ENCODE measurements at regions of chr1 and their contacts with region 1.

Region 1: DNA sequence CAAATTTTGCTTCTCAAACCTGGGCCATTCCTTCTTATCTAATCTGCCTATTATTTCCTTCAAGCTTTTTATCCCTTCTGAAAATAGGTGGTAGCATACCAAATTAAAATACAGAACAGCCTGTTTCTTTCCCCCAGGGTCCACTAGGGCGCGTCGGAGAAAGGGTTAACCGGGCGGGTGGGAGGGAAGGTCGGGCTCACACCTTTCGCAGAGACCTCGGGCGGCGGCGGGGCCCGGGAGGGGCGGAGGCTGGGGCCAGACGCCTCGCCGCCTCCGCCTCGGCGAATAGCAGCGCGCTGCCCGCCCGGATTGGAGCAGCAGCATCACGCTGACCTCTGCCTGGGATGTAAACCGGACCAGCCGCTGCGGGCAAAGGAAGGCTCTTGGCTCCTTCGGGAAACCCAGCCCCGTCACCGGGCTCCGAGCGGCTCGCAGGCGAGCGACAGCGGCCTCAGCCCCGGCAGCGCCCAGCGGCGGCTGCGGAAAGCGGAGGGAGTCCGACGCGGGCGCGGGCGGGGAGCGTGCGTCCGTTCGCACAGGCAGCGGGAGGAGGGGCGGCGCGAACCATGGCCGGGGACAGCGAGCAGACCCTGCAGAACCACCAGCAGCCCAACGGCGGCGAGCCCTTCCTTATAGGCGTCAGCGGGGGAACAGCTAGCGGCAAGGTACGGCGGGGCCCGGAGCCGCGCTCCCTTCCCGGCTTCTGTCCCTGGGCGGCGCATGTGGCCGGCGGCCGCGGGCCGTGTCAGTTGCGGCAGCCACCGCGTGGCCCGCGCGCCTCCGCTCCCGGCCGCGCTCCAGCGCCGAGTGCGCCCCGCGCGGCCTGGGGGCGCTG is at the start of gene UCK2:
- DNase-seq: peak; percentile 85 to 87
- ATAC-seq: peak; percentile 89
- total RNA-seq, gene UCK2: 55.0 to 57.8 TPM

Region 2: GRCh38 chr1:165279882-165280281 is 547.6 kb before region 1 on chr1:
- intact Hi-C with region 1: no loop called
- DNase-seq: no peak
- ATAC-seq: no peak

Region 3: DNA sequence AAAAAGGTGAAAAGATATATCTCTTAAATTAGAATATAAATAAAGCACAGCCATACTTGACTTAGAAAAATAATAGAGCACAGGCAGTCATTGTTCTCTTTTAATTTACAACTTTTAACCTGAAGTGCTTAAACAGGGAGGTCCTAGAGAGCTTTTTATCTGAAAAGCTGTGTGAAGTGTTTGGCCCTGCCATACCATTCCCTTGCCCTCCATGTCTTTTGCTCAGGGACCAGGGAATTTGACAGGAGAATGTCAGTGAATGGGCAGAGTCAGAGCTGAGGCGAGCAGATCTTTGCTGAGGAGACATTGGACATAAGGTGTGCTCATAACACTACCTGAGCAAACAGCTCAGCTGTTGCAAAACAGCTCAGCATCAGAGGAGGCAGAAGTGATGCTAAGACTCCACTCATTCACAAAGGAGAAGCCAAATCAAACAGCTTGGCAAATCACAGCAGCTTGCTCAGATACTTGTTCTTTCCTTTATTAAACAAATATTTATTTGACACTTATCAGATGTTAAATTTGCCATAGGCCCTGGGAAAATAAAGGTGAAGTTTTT is 211.4 kb before region 1 on chr1:
- intact Hi-C with region 1: no loop called
- DNase-seq: no peak
- ATAC-seq: no peak

Region 4: DNA sequence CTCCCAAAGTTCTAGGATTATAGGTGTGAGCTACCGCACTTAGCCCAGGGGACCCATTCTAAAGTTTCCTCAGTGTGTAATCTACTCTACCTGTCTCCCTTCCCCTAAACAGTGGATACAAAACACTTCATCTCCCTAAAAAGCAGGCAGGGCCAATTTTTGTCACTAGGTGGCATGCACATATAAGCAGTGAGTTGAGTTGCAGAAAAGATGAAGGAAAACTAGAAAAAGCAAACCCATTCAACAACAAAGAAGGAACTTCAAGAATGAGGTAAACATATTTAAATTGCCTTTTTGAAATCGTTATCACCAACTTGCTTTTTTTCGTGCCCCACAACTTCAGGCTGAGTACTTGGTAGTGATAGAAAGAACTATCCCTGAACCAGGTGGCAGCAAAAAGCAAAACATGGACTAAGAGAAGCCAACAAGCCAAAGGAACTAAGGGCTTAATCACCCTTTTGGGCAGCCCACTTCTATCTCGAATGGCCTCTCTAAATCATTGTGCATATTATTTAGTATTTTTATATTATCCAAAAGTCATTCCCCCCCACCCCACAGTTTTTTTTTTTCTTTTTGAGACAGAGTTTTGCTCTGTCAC is 109.5 kb before region 1 on chr1:
- intact Hi-C with region 1: loop called in 1 of 2 experiments (anchors 10 kb)
- DNase-seq: peak in 1 of 2 donors; percentile 59
- ATAC-seq: peak; percentile 81